SK-N-SH (cell line): ENCODE measurements at regions of chr9 and their contacts with region 1.

Region 1: DNA sequence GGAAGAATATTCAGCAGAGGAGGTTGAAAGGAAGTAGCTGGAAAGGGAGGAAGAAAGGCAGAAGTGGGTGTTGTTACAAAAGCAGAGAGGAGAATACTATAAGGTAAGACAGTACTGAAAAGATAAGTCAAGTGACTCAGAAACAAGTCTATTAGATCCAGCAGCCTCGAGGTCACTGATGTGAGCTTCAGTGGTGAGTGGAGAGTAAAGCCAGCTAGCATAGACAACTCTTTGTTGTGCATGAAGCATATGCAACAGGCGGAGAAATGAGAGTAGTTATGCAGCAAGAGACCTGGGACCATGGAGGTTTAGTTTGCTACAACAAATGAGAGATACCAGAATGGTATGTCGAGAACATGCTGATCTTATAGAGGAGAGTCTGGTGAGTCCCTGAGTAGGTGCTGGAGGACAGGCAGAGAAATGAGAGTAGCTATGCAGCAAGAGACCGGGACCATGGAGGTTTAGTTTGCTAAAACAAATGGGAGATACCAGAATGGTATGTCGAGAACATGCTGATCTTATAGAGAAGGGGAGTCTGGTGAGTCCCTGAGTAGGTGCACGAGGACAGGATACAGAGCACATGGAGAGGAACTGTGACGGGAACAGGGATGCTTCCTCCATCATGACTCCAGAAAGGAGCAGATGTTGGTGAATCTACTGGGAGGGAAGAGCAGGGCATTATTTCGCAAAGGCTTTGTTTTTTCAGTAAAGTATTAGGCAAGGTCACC is 36.0 kb downstream of the EQTN start:
- DNase-seq: no peak
- H3K4me3 ChIP-seq: no peak overlapping the region
- H3K27ac ChIP-seq: no peak overlapping the region
- H3K4me1 ChIP-seq: no peaks in the 10 kb centered on the region
- H3K27me3 ChIP-seq: no peaks in the 10 kb centered on the region
- CTCF ChIP-seq: no peak
- EP300 ChIP-seq: no peak
- RAD21 ChIP-seq: no peak

Region 2: DNA sequence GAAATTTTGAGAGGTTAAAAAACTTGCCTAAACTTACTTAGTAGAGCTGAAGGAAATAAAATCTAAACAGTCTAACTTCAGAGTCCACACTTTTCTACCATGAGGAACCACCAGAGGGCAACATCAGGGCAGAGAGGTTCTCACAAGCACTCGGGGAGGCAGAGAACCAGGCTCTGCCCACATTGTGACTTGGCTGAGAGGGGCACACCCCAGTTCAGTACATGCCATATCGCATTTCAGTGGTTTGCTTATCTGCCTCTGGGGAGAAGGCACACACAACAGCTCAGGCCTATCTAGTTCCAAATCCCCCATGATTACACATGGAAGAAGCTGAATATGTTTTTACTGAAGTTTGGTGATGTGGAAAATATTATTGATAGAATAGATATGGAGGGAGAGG is 13.2 kb before region 1 on chr9:
- CTCF ChIA-PET with region 1: interaction called, 11 read pairs
- POLR2A ChIA-PET with region 1: no interaction called
- DNase-seq: peak; percentile 44
- H3K4me3 ChIP-seq: no peak overlapping the region
- H3K27ac ChIP-seq: no peak overlapping the region
- H3K4me1 ChIP-seq: no peaks in the 10 kb centered on the region; a peak in 1 of 4 replicates
- H3K27me3 ChIP-seq: no peaks in the 10 kb centered on the region
- CTCF ChIP-seq: peak; percentile 70
- EP300 ChIP-seq: no peak
- RAD21 ChIP-seq: peak; percentile 56